Activated CD4-positive, alpha-beta memory T cell treated with anti-CD3 and anti-CD28 coated beads for 36 hours (primary cell): ENCODE measurements at regions of chr3 and their contacts with region 1.

Region 1: GRCh38 chr3:111539351-111540331 is 2.4 kb upstream of the CD96 start:
- DNase-seq: peak; percentile 78
- H3K4me3 Mint-ChIP-seq: peak overlapping the region; percentile 64
- H3K27ac Mint-ChIP-seq: peak overlapping the region; percentile 83
- H3K4me1 Mint-ChIP-seq: peaks cover 71% of the 10 kb centered on the region
- H3K27me3 Mint-ChIP-seq: no peaks in the 10 kb centered on the region

Region 2: GRCh38 chr3:109927161-109927560 is 1612.5 kb before region 1 on chr3:
- CTCF ChIA-PET with region 1: no interaction called
- POLR2A ChIA-PET with region 1: no interaction called
- intact Hi-C with region 1: loop called (anchors 1 kb)
- DNase-seq: peak; percentile 34
- H3K4me3 Mint-ChIP-seq: no peak overlapping the region
- H3K27ac Mint-ChIP-seq: no peak overlapping the region
- H3K4me1 Mint-ChIP-seq: peaks cover 5% of the 10 kb centered on the region
- H3K27me3 Mint-ChIP-seq: no peaks in the 10 kb centered on the region

Region 3: GRCh38 chr3:111071257-111072015 is 468.2 kb before region 1 on chr3 and contains the start of gene NECTIN3:
- CTCF ChIA-PET with region 1: interaction called, 3 read pairs
- POLR2A ChIA-PET with region 1: interaction called, 4 read pairs
- intact Hi-C with region 1: loop called (anchors 1 kb)
- DNase-seq: peak; percentile 92
- H3K4me3 Mint-ChIP-seq: peak within 1 kb of the TSS; percentile 91
- H3K27ac Mint-ChIP-seq: peak within 1 kb of the TSS; percentile 75
- H3K4me1 Mint-ChIP-seq: peaks cover 41% of the 10 kb centered on the region
- H3K27me3 Mint-ChIP-seq: peaks cover 20% of the 10 kb centered on the region
- total RNA-seq, gene NECTIN3: 10.5 to 11.3 TPM

Region 4: DNA sequence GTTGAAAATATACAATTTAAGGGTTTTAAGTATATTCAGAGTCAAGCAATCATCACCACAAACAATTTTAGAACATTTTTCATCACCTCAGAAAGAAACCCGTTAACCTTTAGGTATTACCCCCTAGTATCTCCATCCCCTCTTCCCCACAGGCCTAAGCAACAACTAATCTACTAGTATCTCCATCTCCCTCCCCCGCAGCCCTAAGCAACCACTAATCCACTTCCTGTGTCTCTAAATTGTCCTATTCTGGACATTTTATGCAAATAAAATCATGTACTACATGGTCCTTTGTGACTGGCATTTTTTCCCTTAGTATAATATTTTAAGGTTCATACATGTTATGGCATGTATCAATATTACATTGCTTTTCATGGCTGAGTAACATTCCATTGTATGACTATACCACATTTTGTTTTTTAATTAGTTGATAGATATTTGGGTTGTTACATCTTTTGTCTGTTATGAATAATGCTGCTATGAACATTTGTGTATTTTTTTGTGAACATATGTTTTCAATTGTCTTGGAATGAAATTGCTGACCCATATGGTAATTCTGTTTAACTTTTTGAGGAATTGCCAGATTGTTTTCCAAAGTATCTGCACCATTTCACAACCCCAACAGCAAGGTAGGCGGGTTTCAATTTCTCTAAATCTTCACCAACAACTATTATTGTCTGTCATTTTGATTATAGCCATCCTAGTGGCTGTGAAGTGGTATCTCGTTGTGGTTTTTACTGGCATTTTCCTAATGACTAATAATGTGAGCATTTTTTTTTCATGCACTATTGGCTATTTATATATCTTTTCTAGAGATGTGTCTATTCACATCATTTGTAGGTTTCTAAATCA is 213.3 kb before region 1 on chr3:
- CTCF ChIA-PET with region 1: interaction called, 5 read pairs
- POLR2A ChIA-PET with region 1: no interaction called
- intact Hi-C with region 1: loop called (anchors 2 kb)
- DNase-seq: peak; percentile 34
- H3K4me3 Mint-ChIP-seq: no peak overlapping the region
- H3K27ac Mint-ChIP-seq: no peak overlapping the region
- H3K4me1 Mint-ChIP-seq: peaks cover 31% of the 10 kb centered on the region
- H3K27me3 Mint-ChIP-seq: no peaks in the 10 kb centered on the region

Region 5: GRCh38 chr3:111517801-111518200 is 21.8 kb before region 1 on chr3:
- CTCF ChIA-PET with region 1: no interaction called
- POLR2A ChIA-PET with region 1: no interaction called
- intact Hi-C with region 1: no loop called
- DNase-seq: no peak
- H3K4me3 Mint-ChIP-seq: no peak overlapping the region
- H3K27ac Mint-ChIP-seq: no peak overlapping the region
- H3K4me1 Mint-ChIP-seq: no peaks in the 10 kb centered on the region
- H3K27me3 Mint-ChIP-seq: no peaks in the 10 kb centered on the region

Region 6: DNA sequence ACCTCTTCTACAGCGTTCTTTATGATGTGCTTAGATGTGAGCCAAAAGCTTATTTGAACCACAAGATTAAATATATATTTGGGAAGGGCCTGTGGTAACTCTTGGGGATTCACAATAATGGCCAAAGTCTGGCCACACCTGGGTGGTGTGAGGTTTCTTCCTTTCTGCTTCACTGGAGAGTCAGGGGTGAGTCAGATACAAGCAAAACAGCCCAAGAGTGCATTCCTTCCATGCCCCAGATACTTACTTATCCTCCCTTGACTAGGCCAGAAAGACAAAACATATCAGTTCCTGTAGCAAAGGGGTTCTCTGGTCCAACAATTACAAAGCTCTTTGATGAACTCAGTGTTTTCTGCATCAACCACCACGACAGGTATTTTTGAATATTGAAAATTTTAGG is 54.6 kb after region 1 on chr3:
- CTCF ChIA-PET with region 1: interaction called, 11 read pairs
- POLR2A ChIA-PET with region 1: interaction called, 87 read pairs
- intact Hi-C with region 1: loop called (anchors 1 kb)
- DNase-seq: no peak
- H3K4me3 Mint-ChIP-seq: peak overlapping the region; percentile 86
- H3K27ac Mint-ChIP-seq: peak overlapping the region; percentile 97
- H3K4me1 Mint-ChIP-seq: peaks cover 57% of the 10 kb centered on the region
- H3K27me3 Mint-ChIP-seq: peaks cover 2% of the 10 kb centered on the region

Region 7: DNA sequence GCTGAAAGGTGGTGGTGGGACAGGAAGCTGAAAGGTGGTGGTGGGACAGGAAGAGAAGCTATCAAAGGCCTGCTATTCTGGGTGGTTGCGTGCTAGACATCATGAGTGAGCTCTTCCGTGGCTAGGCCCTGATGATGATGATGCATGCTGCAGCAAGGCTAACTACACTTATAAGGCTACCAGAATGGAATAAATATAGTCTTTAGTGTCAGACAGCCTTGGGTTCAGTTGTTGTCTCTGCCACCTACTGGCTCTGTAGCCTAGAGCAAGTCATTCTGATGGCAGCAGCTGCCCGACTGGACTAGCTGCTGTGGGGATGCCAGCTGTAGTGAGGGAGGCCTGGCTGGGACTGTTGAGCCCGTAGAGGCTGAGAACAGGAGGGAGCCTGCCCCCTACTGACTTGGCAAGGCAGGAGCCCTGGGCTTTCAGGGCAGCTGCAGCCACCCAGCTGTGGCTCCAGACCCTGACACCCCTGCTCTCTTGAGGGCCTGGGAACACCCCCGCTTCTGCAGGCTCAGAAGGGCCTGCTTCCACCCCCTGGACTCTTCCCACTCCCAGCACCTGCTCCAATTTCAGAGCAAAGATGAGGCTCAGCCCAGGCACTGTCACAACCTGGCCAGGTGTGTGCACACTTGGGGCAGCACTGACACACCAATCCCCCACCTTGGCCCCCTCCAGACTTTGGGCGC is 76.9 kb after region 1 on chr3:
- CTCF ChIA-PET with region 1: interaction called, 38 read pairs
- POLR2A ChIA-PET with region 1: interaction called, 10 read pairs
- intact Hi-C with region 1: loop called (anchors 1 kb)
- DNase-seq: peak; percentile 89
- H3K4me3 Mint-ChIP-seq: peak overlapping the region; percentile 49
- H3K27ac Mint-ChIP-seq: peak overlapping the region; percentile 92
- H3K4me1 Mint-ChIP-seq: peaks cover 77% of the 10 kb centered on the region
- H3K27me3 Mint-ChIP-seq: no peaks in the 10 kb centered on the region